K562 (cell line): ENCODE measurements at regions of chr7 and their contacts with region 1.

Region 1: GRCh38 chr7:148262721-148263229 is 327.8 kb upstream of the C7orf33 start:
- DNase-seq: peak; percentile 78 to 90 (median 84)
- ATAC-seq: peak; percentile 92
- H3K4me3 ChIP-seq: no peak overlapping the region
- H3K27ac ChIP-seq: no peak overlapping the region
- H3K4me1 ChIP-seq: no peaks in the 10 kb centered on the region; a peak in 1 of 5 replicates
- H3K27me3 ChIP-seq: peaks cover 2 to 11% of the 10 kb centered on the region in 2 experiments; a peak in 4 of 5 replicates
- CTCF ChIP-seq: peak; percentile 87 to 98 (median 94)
- EP300 ChIP-seq: no peak
- POLR2A ChIP-seq: no peak
- RAD21 ChIP-seq: peak; percentile 77 to 87

Region 2: GRCh38 chr7:147245292-147245691 is 1017.5 kb before region 1 on chr7:
- CTCF ChIA-PET with region 1: no interaction called
- POLR2A ChIA-PET with region 1: no interaction called
- in situ Hi-C with region 1: no loop called
- intact Hi-C with region 1: loop called (anchors 5 kb)
- DNase-seq: peak; percentile 51 to 56 (median 56)
- ATAC-seq: peak; percentile 86
- H3K4me3 ChIP-seq: no peak overlapping the region
- H3K27ac ChIP-seq: no peak overlapping the region
- H3K4me1 ChIP-seq: no peaks in the 10 kb centered on the region
- H3K27me3 ChIP-seq: no peaks in the 10 kb centered on the region
- CTCF ChIP-seq: peak; percentile 44 to 70 (median 57)
- EP300 ChIP-seq: no peak
- POLR2A ChIP-seq: no peak
- RAD21 ChIP-seq: peak in 1 of 2 experiments; percentile 38; a peak in 2 of 4 replicates

Region 3: GRCh38 chr7:148485618-148486017 is 222.8 kb after region 1 on chr7:
- CTCF ChIA-PET with region 1: no interaction called
- POLR2A ChIA-PET with region 1: no interaction called
- in situ Hi-C with region 1: no loop called
- intact Hi-C with region 1: loop called (anchors 5 kb)
- DNase-seq: no peak
- ATAC-seq: no peak
- H3K4me3 ChIP-seq: no peak overlapping the region
- H3K27ac ChIP-seq: no peak overlapping the region
- H3K4me1 ChIP-seq: peaks cover 0 to 2% of the 10 kb centered on the region in 2 experiments; a peak in 1 of 5 replicates
- H3K27me3 ChIP-seq: peaks cover 35 to 60% of the 10 kb centered on the region in 2 experiments
- CTCF ChIP-seq: peak in 1 of 3 experiments; percentile 21; a peak in 1 of 6 replicates
- EP300 ChIP-seq: no peak
- POLR2A ChIP-seq: no peak
- RAD21 ChIP-seq: peak in 1 of 2 experiments; percentile 18; a peak in 1 of 4 replicates

Region 4: GRCh38 chr7:148527707-148528168 is 265.0 kb after region 1 on chr7:
- CTCF ChIA-PET with region 1: interaction called, 5 read pairs
- POLR2A ChIA-PET with region 1: no interaction called
- in situ Hi-C with region 1: no loop called
- intact Hi-C with region 1: loop called (anchors 2 kb)
- DNase-seq: peak; percentile 84 to 94 (median 86)
- ATAC-seq: peak; percentile 100
- H3K4me3 ChIP-seq: no peak overlapping the region
- H3K27ac ChIP-seq: no peak overlapping the region
- H3K4me1 ChIP-seq: peaks cover 2 to 4% of the 10 kb centered on the region in 2 experiments; a peak in 2 of 5 replicates
- H3K27me3 ChIP-seq: peaks cover 3 to 12% of the 10 kb centered on the region in 2 experiments; a peak in 3 of 5 replicates
- CTCF ChIP-seq: peak; percentile 99 to 100 (median 100)
- EP300 ChIP-seq: no peak
- POLR2A ChIP-seq: no peak
- RAD21 ChIP-seq: peak; percentile 54 to 81

Region 5: DNA sequence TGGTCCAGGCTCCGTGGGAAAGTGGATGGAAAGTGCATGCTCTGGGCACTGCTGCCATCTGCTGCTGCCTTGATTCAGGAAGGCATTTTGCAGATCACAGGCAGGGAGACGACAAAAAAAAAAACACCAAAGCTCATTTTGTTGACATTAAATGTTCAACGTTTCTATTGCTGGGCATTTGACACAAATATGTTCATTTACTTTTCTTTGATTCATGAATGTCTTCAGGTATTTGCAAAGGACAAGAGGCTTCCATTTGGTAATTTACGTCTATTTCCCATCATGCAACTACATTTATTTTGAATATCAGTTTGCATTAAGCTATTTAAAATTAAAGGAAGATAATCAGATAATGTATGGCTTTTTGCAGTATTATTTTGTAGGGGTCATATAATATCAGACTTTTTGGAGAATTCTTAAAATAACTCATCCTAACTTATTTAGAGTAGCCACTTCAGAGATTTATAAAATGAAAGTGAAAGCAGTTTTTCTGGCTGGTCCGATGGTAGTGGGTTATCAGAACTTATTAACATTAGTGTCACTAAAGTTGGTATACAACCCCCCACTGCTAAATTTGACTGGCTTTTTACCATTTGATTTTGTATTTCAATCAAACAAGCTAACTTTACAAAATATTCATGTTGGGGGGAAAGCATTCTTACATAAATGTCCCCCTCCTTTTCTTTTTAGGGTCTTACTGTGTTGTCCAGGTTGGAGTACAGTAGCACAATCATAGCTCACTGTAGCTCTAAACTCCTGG is 700.2 kb after region 1 on chr7:
- CTCF ChIA-PET with region 1: interaction called, 11 read pairs
- POLR2A ChIA-PET with region 1: no interaction called
- in situ Hi-C with region 1: loop called (anchors 10 kb)
- intact Hi-C with region 1: loop called (anchors 1 kb)
- DNase-seq: peak; percentile 61 to 86 (median 72)
- ATAC-seq: peak; percentile 65
- H3K4me3 ChIP-seq: peak overlapping the region; percentile 49
- H3K27ac ChIP-seq: peak overlapping the region; percentile 62
- H3K4me1 ChIP-seq: peaks cover 16 to 32% of the 10 kb centered on the region in 2 experiments; a peak in 4 of 5 replicates
- H3K27me3 ChIP-seq: no peaks in the 10 kb centered on the region
- CTCF ChIP-seq: peak; percentile 89 to 98 (median 97)
- EP300 ChIP-seq: peak; percentile 41; the same call in 1 of the 2 replicates
- POLR2A ChIP-seq: no peak
- RAD21 ChIP-seq: peak; percentile 95 to 96